ENCODE measurements at regions of chr15 and their contacts with region 1.

Region 1: DNA sequence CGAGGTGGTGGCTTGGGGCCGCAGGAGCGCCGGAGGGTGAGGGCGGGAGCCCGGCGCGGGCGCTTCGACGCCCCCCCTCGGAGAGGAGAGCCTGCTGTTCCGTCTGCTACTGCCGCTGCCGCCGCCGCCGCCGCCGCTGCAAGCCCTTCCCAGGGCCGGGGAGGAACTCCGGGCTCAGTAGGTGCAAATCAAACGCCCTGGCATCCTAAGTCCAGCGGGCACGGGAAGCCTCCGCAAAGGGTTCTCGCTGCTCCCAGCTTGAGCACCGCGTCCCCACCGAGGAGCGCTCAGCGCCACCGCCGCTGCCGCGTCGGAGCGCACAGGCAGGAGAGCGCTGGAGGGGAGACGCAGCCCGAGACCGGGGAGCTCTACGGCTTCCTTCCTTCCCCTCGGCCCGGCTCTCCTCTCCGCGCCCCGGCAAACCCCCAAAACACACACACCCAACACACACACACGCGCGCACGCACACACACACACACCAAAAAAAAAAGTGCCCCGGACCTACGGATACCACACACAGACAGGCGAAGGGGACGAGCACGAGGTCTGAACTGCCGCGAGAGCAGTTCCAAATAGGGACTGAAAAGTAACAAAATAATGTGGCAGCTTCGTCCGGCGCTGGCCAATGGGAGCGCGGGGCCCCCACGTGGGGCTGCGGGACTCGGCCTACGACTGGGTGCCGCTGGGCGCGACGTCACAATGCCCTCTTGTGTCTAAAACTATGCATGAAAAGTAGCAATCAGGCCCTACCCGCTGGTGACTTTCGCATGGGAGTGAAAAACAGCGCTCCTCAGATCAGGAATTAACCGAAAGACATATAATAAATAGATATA is at the start of gene TLE3:
- DNase-seq: peak; percentile 99
- H3K4me3 Mint-ChIP-seq: peak within 1 kb of the TSS; percentile 88
- H3K27ac Mint-ChIP-seq: peak within 1 kb of the TSS; percentile 95
- H3K4me1 Mint-ChIP-seq: peaks cover 33% of the 10 kb centered on the region
- H3K27me3 Mint-ChIP-seq: no peaks in the 10 kb centered on the region
- total RNA-seq, gene TLE3: 85.4 to 95.1 TPM

Region 2: GRCh38 chr15:69576035-69576526 is 521.5 kb before region 1 on chr15:
- CTCF ChIA-PET with region 1: interaction called, 4 read pairs
- POLR2A ChIA-PET with region 1: no interaction called
- intact Hi-C with region 1: loop called (anchors 5 kb)
- DNase-seq: peak; percentile 82
- H3K4me3 Mint-ChIP-seq: no peak overlapping the region
- H3K27ac Mint-ChIP-seq: no peak overlapping the region
- H3K4me1 Mint-ChIP-seq: peaks cover 37% of the 10 kb centered on the region
- H3K27me3 Mint-ChIP-seq: no peaks in the 10 kb centered on the region

Region 3: DNA sequence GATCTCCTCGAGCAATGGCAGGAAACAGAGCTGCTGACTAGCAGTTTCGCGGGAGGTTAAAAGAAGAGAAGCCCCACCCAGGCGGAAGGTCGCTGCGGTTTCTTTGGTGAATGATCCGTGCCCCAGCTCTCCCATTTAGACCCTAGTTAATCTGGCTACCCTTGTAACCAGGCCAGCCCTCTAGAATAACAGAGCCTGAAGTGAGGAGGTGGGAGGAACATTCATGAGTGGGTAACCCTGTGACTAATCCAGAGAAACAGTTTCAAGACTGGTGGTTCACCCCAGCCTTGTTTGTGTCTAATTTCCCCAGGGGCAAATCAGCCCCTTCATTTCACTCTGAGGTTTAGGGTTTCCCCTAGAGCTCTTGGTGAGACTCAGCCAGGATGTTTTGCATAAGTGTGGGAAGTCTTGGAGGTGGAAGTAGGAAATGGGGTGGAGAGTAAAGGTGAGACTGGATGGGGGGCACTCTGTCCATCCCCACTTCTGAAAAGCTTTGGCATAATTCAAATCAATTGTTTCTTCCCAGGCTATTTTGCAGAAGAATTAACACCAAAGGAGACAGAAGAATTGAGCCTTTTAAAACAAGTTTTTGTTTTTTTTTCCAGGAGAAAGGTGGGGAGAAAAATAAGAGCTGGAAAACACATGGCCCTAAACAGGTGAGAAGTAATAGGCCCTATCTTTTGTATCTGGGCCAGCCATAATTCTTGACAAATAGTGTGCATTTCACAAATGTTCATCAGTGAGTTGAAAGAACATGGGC is 341.8 kb before region 1 on chr15:
- CTCF ChIA-PET with region 1: interaction called, 5 read pairs
- POLR2A ChIA-PET with region 1: interaction called, 43 read pairs
- intact Hi-C with region 1: loop called (anchors 1 kb)
- DNase-seq: peak; percentile 92
- H3K4me3 Mint-ChIP-seq: peak overlapping the region; percentile 52
- H3K27ac Mint-ChIP-seq: peak overlapping the region; percentile 80
- H3K4me1 Mint-ChIP-seq: peaks cover 95% of the 10 kb centered on the region
- H3K27me3 Mint-ChIP-seq: peaks cover 11% of the 10 kb centered on the region

Region 4: DNA sequence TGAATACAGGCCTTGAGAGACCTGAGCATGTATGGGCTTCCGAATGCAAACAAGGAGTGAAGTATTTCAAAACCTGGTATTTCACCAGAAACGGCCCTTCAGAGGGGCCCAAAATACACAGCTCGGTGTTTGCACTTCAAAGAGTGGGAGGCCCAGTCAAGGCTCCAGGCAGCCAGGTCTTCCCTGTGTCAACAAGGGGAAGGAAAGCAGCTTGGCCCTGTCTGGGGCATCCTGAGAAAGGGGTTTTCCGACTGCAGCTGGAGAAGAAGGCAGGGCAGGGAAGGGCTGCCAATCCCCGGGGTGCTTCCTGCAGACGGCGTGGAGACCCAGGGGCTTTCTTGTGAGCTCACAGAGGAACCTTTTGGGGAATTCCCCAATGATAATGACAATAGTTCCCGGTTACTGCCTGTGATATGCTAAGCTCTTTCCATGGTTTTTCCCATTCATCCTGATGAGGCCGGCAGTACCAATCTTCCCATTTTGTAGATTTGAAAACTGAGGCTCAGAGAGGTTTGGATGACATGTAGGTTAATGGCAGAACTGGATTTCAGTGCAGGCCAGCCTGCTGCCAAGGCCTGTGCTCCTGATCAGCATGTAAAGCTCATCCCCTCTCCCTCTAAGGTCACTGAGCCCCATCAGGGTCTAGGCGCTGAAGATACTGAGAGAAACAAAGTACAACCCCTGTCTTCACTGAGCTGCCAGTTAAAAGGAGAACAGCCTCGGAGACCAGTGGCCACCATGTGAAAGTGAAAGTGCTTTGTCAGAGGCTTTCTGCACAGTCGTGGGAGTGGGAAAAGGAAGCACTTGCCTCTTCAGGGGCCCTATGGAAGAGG is 43.2 kb after region 1 on chr15:
- CTCF ChIA-PET with region 1: interaction called, 3 read pairs
- POLR2A ChIA-PET with region 1: interaction called, 18 read pairs
- intact Hi-C with region 1: loop called (anchors 1 kb)
- DNase-seq: peak; percentile 61
- H3K4me3 Mint-ChIP-seq: peak overlapping the region; percentile 7
- H3K27ac Mint-ChIP-seq: peak overlapping the region; percentile 38
- H3K4me1 Mint-ChIP-seq: peaks cover 34% of the 10 kb centered on the region
- H3K27me3 Mint-ChIP-seq: peaks cover 15% of the 10 kb centered on the region

Region 5: DNA sequence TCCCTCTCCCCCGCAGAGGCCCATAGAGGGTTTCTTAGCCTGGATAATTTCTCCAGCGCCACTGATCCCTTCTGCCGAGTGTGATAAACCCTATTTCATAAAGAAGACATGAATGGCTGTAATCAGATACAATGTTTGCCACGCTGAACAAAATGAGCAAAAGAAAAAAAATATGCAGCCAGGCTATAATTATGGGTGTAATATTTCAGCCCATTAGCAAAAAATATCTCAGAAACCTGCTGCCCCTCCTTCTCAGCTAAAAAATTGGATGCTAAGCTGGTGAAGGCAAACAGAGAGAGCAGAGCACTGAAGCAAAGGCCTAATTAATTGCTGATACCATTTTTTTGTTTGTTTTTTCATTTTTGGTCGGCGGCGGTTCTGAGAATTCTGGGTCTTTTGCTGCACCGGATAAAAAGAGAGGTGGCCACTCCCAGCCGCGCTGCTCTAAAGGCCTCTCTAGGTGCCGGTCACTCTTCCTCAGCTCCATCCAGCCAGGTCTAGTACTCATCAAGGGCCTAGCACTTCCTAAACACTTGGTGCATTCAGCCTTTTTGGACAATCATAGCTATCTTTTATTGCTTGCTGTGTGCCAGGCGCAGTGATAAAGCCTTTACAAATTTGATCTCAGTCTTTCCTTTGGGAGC is 128.9 kb after region 1 on chr15:
- CTCF ChIA-PET with region 1: no interaction called
- POLR2A ChIA-PET with region 1: no interaction called
- intact Hi-C with region 1: no loop called
- DNase-seq: no peak
- H3K4me3 Mint-ChIP-seq: no peak overlapping the region
- H3K27ac Mint-ChIP-seq: no peak overlapping the region
- H3K4me1 Mint-ChIP-seq: peaks cover 8% of the 10 kb centered on the region
- H3K27me3 Mint-ChIP-seq: no peaks in the 10 kb centered on the region

Region 6: GRCh38 chr15:70466895-70467529 is 369.5 kb after region 1 on chr15:
- CTCF ChIA-PET with region 1: interaction called, 10 read pairs
- POLR2A ChIA-PET with region 1: no interaction called
- intact Hi-C with region 1: no loop called
- DNase-seq: peak; percentile 66
- H3K4me3 Mint-ChIP-seq: no peak overlapping the region
- H3K27ac Mint-ChIP-seq: no peak overlapping the region
- H3K4me1 Mint-ChIP-seq: no peaks in the 10 kb centered on the region
- H3K27me3 Mint-ChIP-seq: peaks cover 22% of the 10 kb centered on the region